PC-3 (cell line): ENCODE measurements at regions of chr18 and their contacts with region 1.

Region 1: GRCh38 chr18:35580701-35581539 is 620 bp upstream of the GALNT1 start:
- DNase-seq: peak; percentile 21
- ATAC-seq: peak; percentile 61
- H3K4me3 ChIP-seq: peak overlapping the region; percentile 70
- H3K27ac ChIP-seq: no peak overlapping the region
- H3K4me1 ChIP-seq: peaks cover 11% of the 10 kb centered on the region
- H3K27me3 ChIP-seq: no peaks in the 10 kb centered on the region
- CTCF ChIP-seq: no peak

Region 2: GRCh38 chr18:35407871-35408481 is 172.9 kb before region 1 on chr18:
- CTCF ChIA-PET with region 1: no interaction called
- POLR2A ChIA-PET with region 1: no interaction called
- intact Hi-C with region 1: loop called (anchors 5 kb)
- DNase-seq: peak; percentile 64
- ATAC-seq: peak; percentile 59
- H3K4me3 ChIP-seq: no peak overlapping the region
- H3K27ac ChIP-seq: no peak overlapping the region
- H3K4me1 ChIP-seq: peaks cover 14% of the 10 kb centered on the region
- H3K27me3 ChIP-seq: no peaks in the 10 kb centered on the region
- CTCF ChIP-seq: peak; percentile 69

Region 3: GRCh38 chr18:35478520-35479435 is 102.1 kb before region 1 on chr18:
- CTCF ChIA-PET with region 1: no interaction called
- POLR2A ChIA-PET with region 1: interaction called, 4 read pairs
- intact Hi-C with region 1: loop called (anchors 10 kb)
- DNase-seq: peak; percentile 83
- ATAC-seq: peak; percentile 91
- H3K4me3 ChIP-seq: peak overlapping the region; percentile 48
- H3K27ac ChIP-seq: peak overlapping the region; percentile 98
- H3K4me1 ChIP-seq: peaks cover 45% of the 10 kb centered on the region
- H3K27me3 ChIP-seq: no peaks in the 10 kb centered on the region
- CTCF ChIP-seq: no peak

Region 4: DNA sequence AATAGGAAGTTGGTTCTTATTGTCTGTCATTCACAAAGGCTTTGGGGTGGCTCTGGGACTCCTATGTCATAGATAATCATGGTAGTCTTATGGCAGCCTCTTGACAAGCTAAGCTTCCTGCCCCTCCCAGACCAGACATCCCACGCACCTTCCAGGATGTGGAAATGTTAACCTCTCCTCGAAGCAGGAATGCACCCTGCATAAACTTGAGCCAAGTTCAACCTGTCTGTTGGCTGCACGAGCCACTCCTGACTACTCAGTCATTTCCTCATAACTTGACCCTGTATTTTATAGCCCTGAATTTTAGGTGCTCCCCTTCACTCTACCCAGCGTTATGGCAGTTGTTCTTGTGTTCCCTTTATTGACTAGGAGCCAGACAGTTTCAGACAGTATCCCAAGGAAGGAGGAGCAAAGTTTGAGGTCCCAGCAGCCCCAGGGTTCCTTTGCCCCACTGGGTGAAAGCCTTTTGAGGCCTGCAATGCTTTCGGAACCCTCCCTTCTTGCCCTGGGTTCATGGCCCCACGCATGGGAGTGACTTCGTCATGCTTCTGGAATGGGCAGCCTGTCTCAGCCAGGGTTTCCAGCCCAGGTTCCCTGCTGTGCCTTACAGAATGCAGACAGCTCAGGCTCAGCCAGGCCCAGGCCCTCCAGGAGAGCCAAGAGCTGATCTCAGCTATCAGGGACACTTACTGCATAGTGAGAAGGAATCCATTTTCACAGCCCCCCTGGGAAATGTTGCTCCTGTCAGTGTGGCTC is 67.6 kb before region 1 on chr18:
- CTCF ChIA-PET with region 1: no interaction called
- POLR2A ChIA-PET with region 1: no interaction called
- intact Hi-C with region 1: loop called (anchors 10 kb)
- DNase-seq: peak; percentile 17
- ATAC-seq: no peak
- H3K4me3 ChIP-seq: no peak overlapping the region
- H3K27ac ChIP-seq: no peak overlapping the region
- H3K4me1 ChIP-seq: no peaks in the 10 kb centered on the region
- H3K27me3 ChIP-seq: no peaks in the 10 kb centered on the region
- CTCF ChIP-seq: no peak

Region 5: DNA sequence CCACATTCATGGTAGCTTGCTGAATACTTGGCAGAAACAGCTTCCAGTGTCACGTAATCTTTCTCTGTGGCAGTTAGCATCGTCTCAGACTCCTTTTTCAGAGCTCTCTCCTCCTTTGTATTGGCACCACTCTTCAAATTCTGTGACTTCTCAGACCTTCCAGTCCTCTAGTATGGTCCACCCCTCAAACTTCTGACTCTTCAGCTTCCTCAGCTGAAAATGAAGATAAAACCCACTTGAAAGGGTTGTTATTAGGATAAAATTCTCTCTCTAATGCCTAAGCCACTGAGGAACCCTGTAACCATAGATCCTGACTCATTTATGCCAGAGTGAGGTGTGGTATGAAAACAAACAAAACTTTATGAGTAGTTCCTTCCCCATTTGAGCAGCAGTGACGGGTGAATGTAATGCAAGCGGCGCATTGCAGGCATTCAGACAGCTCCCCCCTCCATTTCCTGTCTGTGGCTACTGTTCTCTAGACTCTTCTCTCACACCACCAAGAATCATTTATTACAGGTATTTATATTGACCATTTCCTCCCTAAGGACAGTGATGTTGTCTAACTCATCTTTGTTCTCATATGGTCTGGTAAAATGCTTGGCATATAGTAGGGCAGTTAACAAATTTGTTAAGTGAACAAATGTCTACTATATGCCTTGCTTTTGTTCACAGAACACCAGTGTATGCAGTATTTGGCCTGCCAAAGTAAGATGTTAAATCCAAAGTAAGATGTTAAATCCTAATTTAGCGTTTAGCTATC is 35.9 kb after region 1 on chr18:
- CTCF ChIA-PET with region 1: no interaction called
- POLR2A ChIA-PET with region 1: interaction called, 5 read pairs
- intact Hi-C with region 1: loop called (anchors 2 kb)
- DNase-seq: peak; percentile 72
- ATAC-seq: peak; percentile 93
- H3K4me3 ChIP-seq: peak overlapping the region; percentile 63
- H3K27ac ChIP-seq: peak overlapping the region; percentile 92
- H3K4me1 ChIP-seq: peaks cover 26% of the 10 kb centered on the region
- H3K27me3 ChIP-seq: no peaks in the 10 kb centered on the region
- CTCF ChIP-seq: no peak

Region 6: DNA sequence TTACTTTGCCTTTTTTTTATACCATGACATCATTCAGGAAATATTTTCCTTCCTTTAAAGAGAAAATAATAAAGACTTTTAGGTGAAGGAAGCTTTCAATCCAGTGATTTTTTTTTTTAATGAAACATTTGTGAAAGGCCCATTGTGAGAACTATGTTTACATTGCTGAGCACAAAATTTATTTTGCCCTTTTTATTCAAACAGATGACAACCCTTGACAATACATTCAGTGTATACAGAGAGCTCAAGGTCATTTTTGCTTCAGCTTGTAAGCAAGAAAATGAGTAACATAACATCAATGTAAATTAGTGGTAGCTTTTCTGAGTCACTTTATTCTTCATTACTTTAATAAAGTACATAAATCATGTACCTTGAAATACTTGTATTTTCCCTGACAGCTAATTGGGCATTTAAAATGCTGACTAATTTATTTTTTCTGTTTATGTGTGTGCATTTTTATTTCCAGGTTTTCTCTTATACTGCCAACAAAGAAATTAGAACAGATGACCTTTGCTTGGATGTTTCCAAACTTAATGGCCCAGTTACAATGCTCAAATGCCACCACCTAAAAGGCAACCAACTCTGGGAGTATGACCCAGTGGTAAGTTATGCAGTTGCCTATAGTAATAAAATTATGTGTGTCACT is 122.2 kb after region 1 on chr18:
- CTCF ChIA-PET with region 1: no interaction called
- POLR2A ChIA-PET with region 1: no interaction called
- intact Hi-C with region 1: loop called (anchors 1 kb)
- DNase-seq: peak; percentile 46
- ATAC-seq: peak; percentile 92
- H3K4me3 ChIP-seq: no peak overlapping the region
- H3K27ac ChIP-seq: peak overlapping the region; percentile 60
- H3K4me1 ChIP-seq: peaks cover 15% of the 10 kb centered on the region; the same call in 1 of the 2 replicates
- H3K27me3 ChIP-seq: no peaks in the 10 kb centered on the region
- CTCF ChIP-seq: no peak

Region 7: DNA sequence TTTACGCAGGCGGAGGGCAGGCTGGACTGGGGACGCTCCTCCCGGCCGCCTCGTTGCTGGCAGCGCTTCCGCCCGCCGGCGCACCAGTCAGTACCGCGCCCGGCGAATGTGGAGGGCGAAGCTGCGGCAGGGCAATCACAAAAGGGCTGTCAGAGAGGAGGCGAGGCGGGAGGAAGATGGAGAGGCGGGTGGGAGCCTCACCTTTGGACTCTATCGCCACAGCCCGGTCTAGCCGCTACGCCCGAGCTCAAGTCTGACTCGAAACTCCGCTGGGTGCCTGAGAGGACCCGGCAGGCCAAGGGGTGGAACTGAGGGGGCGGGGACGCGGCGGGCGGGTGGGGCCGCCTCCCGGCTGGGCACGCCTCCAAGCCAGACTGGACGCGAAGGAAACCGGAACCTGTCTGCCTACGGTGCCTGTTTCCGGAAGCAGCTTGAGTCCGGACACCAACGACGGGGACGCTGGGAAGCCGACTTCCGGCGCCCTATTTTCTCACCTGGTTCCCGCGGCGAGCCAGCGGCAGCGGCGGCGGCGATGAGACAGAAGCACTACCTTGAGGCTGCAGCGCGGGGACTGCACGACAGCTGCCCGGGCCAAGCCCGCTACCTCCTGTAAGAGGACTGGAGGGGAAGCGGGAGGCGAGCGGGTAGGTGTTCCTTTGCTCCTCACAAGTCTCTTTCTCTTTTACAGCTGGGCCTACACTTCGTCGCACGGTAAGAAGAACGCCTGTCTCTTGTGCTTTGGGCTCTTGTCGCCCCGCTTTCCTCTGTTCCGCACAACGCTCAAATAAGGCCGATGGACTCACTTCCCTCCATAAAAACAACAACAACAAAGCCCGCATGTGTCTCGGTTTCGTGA is 391.5 kb after region 1 on chr18 and contains the start of gene RMP24:
- CTCF ChIA-PET with region 1: no interaction called
- POLR2A ChIA-PET with region 1: no interaction called
- intact Hi-C with region 1: loop called (anchors 5 kb)
- DNase-seq: peak; percentile 79
- ATAC-seq: peak; percentile 94
- H3K4me3 ChIP-seq: peak within 1 kb of the TSS; percentile 84
- H3K27ac ChIP-seq: peak within 1 kb of the TSS; percentile 51; the same call in 1 of the 2 replicates
- H3K4me1 ChIP-seq: no peaks in the 10 kb centered on the region
- H3K27me3 ChIP-seq: no peaks in the 10 kb centered on the region
- CTCF ChIP-seq: no peak